Endothelial cell of umbilical vein (primary cell): ENCODE measurements at regions of chr1 and their contacts with region 1.

Region 1: DNA sequence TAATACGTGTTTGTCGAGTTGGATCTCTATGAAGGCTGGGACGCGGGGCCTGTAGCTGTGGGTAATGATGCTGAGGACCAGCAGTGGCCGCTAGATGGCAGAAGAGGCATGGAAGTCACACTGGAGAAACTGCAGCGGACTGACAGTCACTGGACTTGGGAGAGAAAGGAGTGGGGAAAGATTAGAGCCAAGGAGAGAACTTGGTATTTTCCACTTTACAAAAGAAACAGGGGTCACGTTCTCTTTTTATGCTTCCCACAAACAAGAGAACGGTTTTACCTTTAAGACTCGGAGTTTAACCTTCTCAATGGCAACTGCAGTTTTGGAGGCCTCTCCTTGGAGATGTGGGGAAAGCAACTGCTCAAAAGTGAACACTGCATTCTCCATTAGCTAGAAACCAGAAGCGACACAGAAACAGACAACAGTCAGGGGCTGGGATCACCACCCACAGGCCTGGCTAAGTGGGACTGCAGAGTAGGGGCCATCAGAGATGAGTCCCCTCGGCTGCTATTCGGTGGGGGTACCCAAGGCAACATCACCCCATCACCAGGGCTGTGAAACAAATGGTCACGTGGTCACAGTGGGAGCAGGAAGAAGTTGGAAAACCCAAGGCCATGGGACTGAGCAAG is 51.1 kb upstream of the EDEM3 start:
- DNase-seq: peak; percentile 83
- H3K4me3 ChIP-seq: no peak overlapping the region
- H3K27ac ChIP-seq: no peak overlapping the region
- H3K4me1 ChIP-seq: peaks cover 4% of the 10 kb centered on the region
- H3K27me3 ChIP-seq: no peaks in the 10 kb centered on the region
- CTCF ChIP-seq: peak; percentile 91 to 93
- POLR2A ChIP-seq: no peak

Region 2: DNA sequence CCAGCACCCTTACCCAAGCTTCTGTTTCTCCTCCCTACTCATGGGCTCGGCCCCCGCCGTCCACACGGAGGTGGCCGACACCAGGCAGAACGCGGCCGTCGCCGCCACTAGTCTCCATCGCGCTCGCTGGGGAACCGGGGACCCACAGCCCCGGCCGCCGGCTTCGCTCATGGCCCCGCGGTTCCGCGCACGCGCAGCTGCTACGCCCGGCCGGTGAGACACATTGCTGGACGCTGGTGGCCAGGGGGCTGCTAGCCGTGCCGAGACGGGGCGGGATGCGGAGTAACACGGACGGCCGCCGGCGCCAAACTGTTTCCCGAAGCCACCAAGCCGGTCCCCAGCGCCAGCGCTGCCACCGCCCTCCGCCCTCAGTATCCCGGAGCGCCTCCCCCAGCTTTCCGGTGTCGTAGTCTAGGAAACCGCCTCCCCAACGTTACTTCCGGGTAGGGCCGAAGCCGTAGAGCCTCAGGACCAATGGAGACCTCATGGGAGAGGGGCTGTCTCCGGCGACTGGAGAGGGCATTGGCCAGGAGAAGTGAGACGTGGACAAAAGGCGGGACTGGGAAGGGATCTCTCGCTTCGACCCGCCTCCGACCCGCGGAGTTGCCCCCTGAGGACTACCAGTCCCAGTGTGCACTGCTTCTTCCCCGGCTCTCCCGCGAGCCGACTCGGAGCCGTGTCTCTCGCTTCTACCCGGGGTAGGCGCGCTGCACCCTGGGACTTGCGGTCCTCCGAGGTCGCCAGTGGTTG is 51.1 kb before region 1 on chr1 and contains the start of gene EDEM3:
- CTCF ChIA-PET with region 1: interaction called, 16 read pairs
- POLR2A ChIA-PET with region 1: no interaction called
- dilution Hi-C with region 1: no loop called
- intact Hi-C with region 1: loop called (anchors 2 kb)
- DNase-seq: peak; percentile 99
- H3K4me3 ChIP-seq: peak within 1 kb of the TSS; percentile 59 to 83 (median 81)
- H3K27ac ChIP-seq: peak within 1 kb of the TSS; percentile 76
- H3K4me1 ChIP-seq: peaks cover 16% of the 10 kb centered on the region
- H3K27me3 ChIP-seq: peaks cover 0 to 3% of the 10 kb centered on the region in 2 experiments
- CTCF ChIP-seq: no peak
- POLR2A ChIP-seq: peak; percentile 93
- total RNA-seq, gene EDEM3: 26.3 and 33.5 TPM in 2 replicates

Region 3: GRCh38 chr1:184838489-184838951 is 32.7 kb after region 1 on chr1:
- CTCF ChIA-PET with region 1: interaction called, 4 read pairs
- POLR2A ChIA-PET with region 1: interaction called, 5 read pairs
- dilution Hi-C with region 1: no loop called
- intact Hi-C with region 1: loop called (anchors 1 kb)
- DNase-seq: no peak
- H3K4me3 ChIP-seq: no peak overlapping the region
- H3K27ac ChIP-seq: no peak overlapping the region
- H3K4me1 ChIP-seq: no peaks in the 10 kb centered on the region
- H3K27me3 ChIP-seq: no peaks in the 10 kb centered on the region
- CTCF ChIP-seq: no peak
- POLR2A ChIP-seq: no peak

Region 4: DNA sequence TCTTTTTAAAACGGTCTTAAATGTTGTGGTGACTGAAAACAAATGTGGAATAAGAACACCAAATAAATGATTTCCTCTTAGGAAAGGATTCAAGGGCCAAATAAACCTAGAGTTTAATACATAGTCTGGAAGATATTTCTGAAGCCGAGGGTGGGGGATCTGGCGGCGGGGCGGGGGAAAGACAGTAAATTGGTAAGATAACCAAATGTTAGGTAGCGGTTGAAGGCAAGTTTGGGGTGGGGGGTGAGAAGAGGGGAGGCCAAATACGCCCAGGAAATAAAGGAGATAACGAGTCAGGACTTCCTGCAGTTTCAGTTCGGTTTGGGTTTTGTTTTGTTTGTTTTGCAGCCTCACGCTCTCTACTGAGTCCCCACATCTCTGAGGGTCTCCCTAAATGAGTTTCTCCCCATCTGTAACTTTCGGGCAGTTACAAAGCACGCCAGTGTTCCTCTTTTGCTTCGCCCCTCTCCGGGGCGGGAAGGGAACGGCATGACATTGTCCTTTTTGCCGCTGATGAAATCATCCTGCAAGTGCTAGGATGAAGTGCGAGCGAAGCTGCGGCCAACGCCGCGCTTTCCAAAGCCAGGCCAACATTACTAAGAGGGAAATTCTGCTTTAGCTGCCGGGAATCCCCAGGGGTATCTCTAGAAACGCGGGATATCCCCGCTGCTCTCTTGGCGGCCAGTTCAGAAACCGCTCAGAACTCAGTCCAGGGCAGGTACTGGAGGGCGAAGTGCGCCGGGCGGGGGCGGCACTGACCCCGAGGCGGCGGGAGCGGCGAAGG is 167.7 kb after region 1 on chr1:
- CTCF ChIA-PET with region 1: interaction called, 20 read pairs
- POLR2A ChIA-PET with region 1: no interaction called
- dilution Hi-C with region 1: no loop called
- intact Hi-C with region 1: no loop called
- DNase-seq: peak; percentile 44
- H3K4me3 ChIP-seq: peak overlapping the region; percentile 34 to 72 (median 54)
- H3K27ac ChIP-seq: no peak overlapping the region
- H3K4me1 ChIP-seq: peaks cover 12% of the 10 kb centered on the region
- H3K27me3 ChIP-seq: peaks cover 18 to 22% of the 10 kb centered on the region in 2 experiments
- CTCF ChIP-seq: no peak
- POLR2A ChIP-seq: no peak

Region 5: GRCh38 chr1:185170291-185170848 is 364.6 kb after region 1 on chr1:
- CTCF ChIA-PET with region 1: interaction called, 173 read pairs
- POLR2A ChIA-PET with region 1: interaction called, 3 read pairs
- dilution Hi-C with region 1: no loop called
- intact Hi-C with region 1: loop called (anchors 1 kb)
- DNase-seq: peak; percentile 80
- H3K4me3 ChIP-seq: no peak overlapping the region
- H3K27ac ChIP-seq: no peak overlapping the region
- H3K4me1 ChIP-seq: peaks cover 6% of the 10 kb centered on the region
- H3K27me3 ChIP-seq: no peaks in the 10 kb centered on the region
- CTCF ChIP-seq: peak; percentile 61 to 65
- POLR2A ChIP-seq: no peak

Region 6: DNA sequence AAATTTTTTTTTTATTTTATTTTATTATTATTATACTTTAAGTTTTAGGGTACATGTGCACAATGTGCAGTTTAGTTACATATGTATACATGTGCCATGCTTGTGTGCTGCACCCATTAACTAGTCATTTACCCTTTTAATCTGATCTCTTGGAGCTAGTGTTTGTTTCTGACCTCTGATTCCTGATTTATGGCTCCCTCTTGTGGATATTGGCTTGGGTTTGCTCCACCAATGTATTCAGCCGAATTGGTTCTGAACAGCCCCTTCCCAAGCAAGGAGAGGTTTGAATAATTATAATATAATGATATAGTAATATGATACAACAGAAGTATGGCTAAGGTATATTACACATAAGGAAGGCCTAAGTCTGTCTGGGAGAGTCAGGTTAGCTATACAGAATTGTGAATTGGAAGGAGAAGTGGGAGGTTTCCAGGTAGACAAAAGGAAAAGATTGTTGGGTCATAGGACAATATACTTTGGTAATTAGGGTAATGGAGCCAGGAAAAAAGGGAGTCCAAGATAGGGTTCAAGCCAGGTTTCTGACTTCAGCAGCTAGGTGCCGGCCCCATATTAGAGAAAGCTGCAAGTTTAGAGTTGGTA is 875.4 kb after region 1 on chr1:
- CTCF ChIA-PET with region 1: interaction called, 24 read pairs
- POLR2A ChIA-PET with region 1: no interaction called
- dilution Hi-C with region 1: no loop called
- intact Hi-C with region 1: loop called (anchors 5 kb)
- DNase-seq: peak; percentile 64
- H3K4me3 ChIP-seq: no peak overlapping the region
- H3K27ac ChIP-seq: no peak overlapping the region
- H3K4me1 ChIP-seq: peaks cover 8% of the 10 kb centered on the region
- H3K27me3 ChIP-seq: no peaks in the 10 kb centered on the region
- CTCF ChIP-seq: peak; percentile 48 to 50
- POLR2A ChIP-seq: no peak